CD4-positive, alpha-beta memory T cell (primary cell): ENCODE measurements at regions of chr3 and their contacts with region 1.

Region 1: DNA sequence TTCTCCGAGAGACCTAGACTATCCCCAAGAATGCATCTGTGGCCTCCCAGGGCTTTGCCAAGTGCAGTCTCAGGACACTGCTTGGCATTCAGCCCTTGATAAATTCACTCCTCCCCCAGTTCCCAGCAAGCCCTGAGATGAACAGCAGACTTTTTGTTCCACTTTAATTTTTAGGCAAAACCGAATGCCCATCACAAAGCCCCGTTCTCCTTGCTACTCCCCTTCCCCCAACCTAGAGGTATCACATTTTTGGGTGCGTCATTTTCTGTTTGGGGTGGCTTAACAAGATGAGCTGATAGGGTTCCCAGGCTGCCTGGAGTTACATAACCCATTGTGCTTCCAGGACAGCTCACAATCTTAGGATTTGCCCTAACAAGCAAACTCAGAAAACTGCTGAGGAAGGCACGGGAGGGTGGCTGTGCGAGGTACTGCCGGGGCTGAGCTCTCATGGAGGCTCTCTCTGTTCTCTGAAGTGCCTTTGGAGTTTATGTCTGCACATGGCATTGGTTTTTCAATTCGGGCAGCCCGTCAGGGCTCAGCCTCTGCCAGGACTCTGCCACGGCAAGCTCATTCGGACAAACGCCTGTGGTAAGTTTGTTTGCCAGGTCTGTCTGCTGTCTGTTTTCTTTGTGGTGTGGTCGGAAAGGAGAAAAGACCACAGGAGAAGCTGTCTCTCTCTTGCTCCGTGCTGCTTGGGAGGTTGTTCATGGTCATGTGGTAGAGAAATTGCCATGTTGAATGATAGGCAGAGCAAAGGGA is at the start of gene TRAK1:
- DNase-seq: no peak
- H3K4me3 ChIP-seq: no peak within 1 kb of the TSS
- H3K4me3 Mint-ChIP-seq: peak within 1 kb of the TSS; percentile 1 to 76 (median 42)
- H3K27ac ChIP-seq: no peak within 1 kb of the TSS
- H3K27ac Mint-ChIP-seq: peak within 1 kb of the TSS; percentile 30 to 89 (median 62)
- H3K4me1 ChIP-seq: peaks cover 7% of the 10 kb centered on the region
- H3K4me1 Mint-ChIP-seq: peaks cover 19 to 42% (median 20%) of the 10 kb centered on the region in 4 donors
- H3K27me3 ChIP-seq: no peaks in the 10 kb centered on the region
- H3K27me3 Mint-ChIP-seq: no peaks in the 10 kb centered on the region
- total RNA-seq, gene TRAK1: 15.9 to 17.2 TPM

Region 2: DNA sequence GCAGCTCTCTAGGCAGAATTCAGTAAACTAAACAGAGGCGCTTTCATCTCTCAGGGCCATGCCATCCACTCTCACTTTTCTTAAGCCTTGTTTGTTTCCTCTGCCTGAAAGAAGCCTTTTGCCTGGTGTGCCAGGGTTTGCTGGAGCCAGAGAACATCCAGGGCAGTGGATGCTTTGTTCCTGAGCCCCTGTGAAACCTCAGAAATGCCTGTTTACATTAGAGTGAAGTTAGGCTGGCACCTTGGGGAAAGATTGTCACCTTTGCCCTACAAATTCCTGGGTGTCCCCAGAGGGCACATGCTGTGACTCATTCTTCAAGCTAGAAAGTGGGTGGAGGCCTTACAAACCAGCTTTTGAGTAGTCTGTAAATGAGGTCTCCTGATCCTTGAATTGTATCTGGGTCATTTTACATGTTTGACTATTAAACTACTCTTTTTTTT is 10.7 kb before region 1 on chr3:
- CTCF ChIA-PET with region 1: interaction called, 74 read pairs
- POLR2A ChIA-PET with region 1: interaction called, 10 read pairs
- intact Hi-C with region 1: no loop called
- DNase-seq: peak in 4 of 5 donors; percentile 13 to 64 (median 30)
- H3K4me3 ChIP-seq: no peak overlapping the region
- H3K4me3 Mint-ChIP-seq: peak overlapping the region in 5 of 8 donors; percentile 47 to 83 (median 62)
- H3K27ac ChIP-seq: peak overlapping the region; percentile 53
- H3K27ac Mint-ChIP-seq: peak overlapping the region; percentile 62 to 95 (median 91)
- H3K4me1 ChIP-seq: peaks cover 48% of the 10 kb centered on the region
- H3K4me1 Mint-ChIP-seq: peaks cover 42 to 68% (median 52%) of the 10 kb centered on the region in 4 donors
- H3K27me3 ChIP-seq: no peaks in the 10 kb centered on the region
- H3K27me3 Mint-ChIP-seq: no peaks in the 10 kb centered on the region

Region 3: DNA sequence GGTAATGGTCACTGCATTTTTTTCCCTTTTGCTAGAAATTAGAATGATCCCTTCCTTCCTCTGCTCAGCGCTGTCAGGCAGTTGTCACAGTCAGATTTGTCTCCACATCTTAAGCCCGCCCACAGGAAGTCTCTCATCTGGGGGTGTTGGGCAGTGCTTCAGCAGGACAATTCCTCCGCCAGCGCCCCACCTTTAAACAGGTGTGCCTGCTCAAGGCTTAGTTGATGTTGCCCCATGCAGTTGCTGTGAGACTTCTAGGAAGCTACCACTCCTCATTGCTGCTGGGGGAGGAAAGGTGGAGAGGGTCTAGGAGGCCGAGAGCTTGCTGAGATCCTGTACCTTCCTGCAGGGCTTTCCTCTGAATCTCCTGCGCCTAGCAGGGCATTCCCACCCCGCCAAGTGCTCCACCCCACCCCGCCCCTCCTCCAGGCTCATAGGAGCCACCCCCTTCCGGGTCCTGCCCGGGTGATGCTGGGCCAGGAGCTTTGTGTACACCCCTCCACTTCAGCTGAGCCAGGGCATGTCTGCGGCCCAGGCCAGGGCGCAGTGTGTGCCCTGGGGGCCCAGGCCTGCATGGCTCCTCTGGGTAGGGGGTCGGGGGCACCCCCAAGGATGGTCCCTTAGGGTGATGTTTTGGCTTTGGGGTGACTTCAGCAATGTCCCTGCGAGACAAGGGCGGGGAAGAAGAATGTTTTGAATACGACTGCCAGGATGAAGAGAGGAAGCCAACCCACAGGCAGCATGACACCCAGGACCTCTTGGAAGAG is 68.7 kb after region 1 on chr3:
- CTCF ChIA-PET with region 1: no interaction called
- POLR2A ChIA-PET with region 1: no interaction called
- intact Hi-C with region 1: no loop called
- DNase-seq: peak; percentile 6 to 47 (median 16)
- H3K4me3 ChIP-seq: no peak overlapping the region
- H3K4me3 Mint-ChIP-seq: peak overlapping the region; percentile 11 to 73 (median 42)
- H3K27ac ChIP-seq: no peak overlapping the region
- H3K27ac Mint-ChIP-seq: peak overlapping the region in 6 of 7 donors; percentile 2 to 71 (median 52)
- H3K4me1 ChIP-seq: peaks cover 14% of the 10 kb centered on the region
- H3K4me1 Mint-ChIP-seq: peaks cover 26 to 39% (median 26%) of the 10 kb centered on the region in 4 donors
- H3K27me3 ChIP-seq: no peaks in the 10 kb centered on the region
- H3K27me3 Mint-ChIP-seq: no peaks in the 10 kb centered on the region